Activated CD4-positive, alpha-beta T cell treated with anti-CD3 and anti-CD28 coated beads, Interleukin-2, amount 10 ng/mL, durations not matched to agents 24 days and 14 days (primary cell): ENCODE measurements at regions of chr15 and their contacts with region 1.

Region 1: GRCh38 chr15:56491110-56491722 is 26.3 kb upstream of the MNS1 start:
- DNase-seq: peak; percentile 87
- H3K4me3 Mint-ChIP-seq: no peak overlapping the region
- H3K27ac Mint-ChIP-seq: no peak overlapping the region
- H3K4me1 Mint-ChIP-seq: peaks cover 4% of the 10 kb centered on the region
- H3K27me3 Mint-ChIP-seq: peaks cover 11% of the 10 kb centered on the region

Region 2: GRCh38 chr15:56732921-56733797 is 241.9 kb after region 1 on chr15 and contains the start of gene ZNF280D:
- intact Hi-C with region 1: loop called (anchors 10 kb)
- DNase-seq: peak; percentile 94
- H3K4me3 Mint-ChIP-seq: peak within 1 kb of the TSS; percentile 91
- H3K27ac Mint-ChIP-seq: peak within 1 kb of the TSS; percentile 96
- H3K4me1 Mint-ChIP-seq: peaks cover 29% of the 10 kb centered on the region
- H3K27me3 Mint-ChIP-seq: peaks cover 2% of the 10 kb centered on the region
- total RNA-seq, gene ZNF280D: 25.9 and 26.2 TPM in 2 replicates

Region 3: DNA sequence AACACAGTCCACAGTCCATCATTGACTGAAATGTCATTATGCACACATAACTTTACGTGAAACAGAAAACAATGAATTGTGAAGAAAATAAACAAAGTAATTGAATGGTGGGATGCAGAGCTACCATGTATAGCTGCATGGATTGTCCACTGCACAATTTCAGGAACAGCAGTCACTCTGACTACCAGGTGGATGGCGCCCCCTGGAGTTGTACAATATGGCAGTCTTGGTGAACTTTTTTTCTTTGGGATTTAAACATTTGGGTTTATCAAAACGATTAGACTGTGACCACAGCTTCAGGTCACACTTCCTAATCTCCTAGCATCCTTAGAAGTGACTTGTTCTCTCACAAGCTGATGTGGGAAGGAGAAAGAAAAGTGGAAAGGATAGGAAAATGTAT is 378.4 kb after region 1 on chr15:
- intact Hi-C with region 1: loop called (anchors 1 kb)
- DNase-seq: peak; percentile 82
- H3K4me3 Mint-ChIP-seq: no peak overlapping the region
- H3K27ac Mint-ChIP-seq: no peak overlapping the region
- H3K4me1 Mint-ChIP-seq: no peaks in the 10 kb centered on the region
- H3K27me3 Mint-ChIP-seq: no peaks in the 10 kb centered on the region

Region 4: GRCh38 chr15:57306161-57306943 is 815.1 kb after region 1 on chr15:
- intact Hi-C with region 1: loop called (anchors 5 kb)
- DNase-seq: peak; percentile 96
- H3K4me3 Mint-ChIP-seq: peak overlapping the region; percentile 71
- H3K27ac Mint-ChIP-seq: no peak overlapping the region
- H3K4me1 Mint-ChIP-seq: peaks cover 5% of the 10 kb centered on the region
- H3K27me3 Mint-ChIP-seq: peaks cover 9% of the 10 kb centered on the region